ENCODE measurements at regions of chr10 and their contacts with region 1.

Region 1: GRCh38 chr10:71522442-71523144 is 125.9 kb downstream of the CDH23 start:
- DNase-seq: no peak
- ATAC-seq: no peak
- H3K4me3 ChIP-seq: no peak overlapping the region
- H3K27ac ChIP-seq: no peak overlapping the region
- H3K4me1 ChIP-seq: peaks cover 0 to 4% (median 0%) of the 10 kb centered on the region in 9 donors
- H3K27me3 ChIP-seq: no peaks in the 10 kb centered on the region
- CTCF ChIP-seq: no peak

Region 2: GRCh38 chr10:71176661-71177060 is 345.9 kb before region 1 on chr10:
- intact Hi-C with region 1: no loop called
- DNase-seq: no peak
- ATAC-seq: no peak
- H3K4me3 ChIP-seq: no peak overlapping the region
- H3K27ac ChIP-seq: no peak overlapping the region
- H3K4me1 ChIP-seq: no peaks in the 10 kb centered on the region
- H3K27me3 ChIP-seq: peaks cover 0 to 6% (median 0%) of the 10 kb centered on the region in 7 donors
- CTCF ChIP-seq: no peak

Region 3: GRCh38 chr10:71671994-71672946 is 149.7 kb after region 1 on chr10:
- intact Hi-C with region 1: loop called in 1 of 10 experiments (anchors 5 kb)
- DNase-seq: no peak
- ATAC-seq: peak in 1 of 8 donors; percentile 41
- H3K4me3 ChIP-seq: no peak overlapping the region
- H3K27ac ChIP-seq: no peak overlapping the region
- H3K4me1 ChIP-seq: no peaks in the 10 kb centered on the region
- H3K27me3 ChIP-seq: no peaks in the 10 kb centered on the region
- CTCF ChIP-seq: no peak

Measured in heart right ventricle (tissue), 16 donors.